ENCODE measurements at regions of chr7 and their contacts with region 1.

Region 1: DNA sequence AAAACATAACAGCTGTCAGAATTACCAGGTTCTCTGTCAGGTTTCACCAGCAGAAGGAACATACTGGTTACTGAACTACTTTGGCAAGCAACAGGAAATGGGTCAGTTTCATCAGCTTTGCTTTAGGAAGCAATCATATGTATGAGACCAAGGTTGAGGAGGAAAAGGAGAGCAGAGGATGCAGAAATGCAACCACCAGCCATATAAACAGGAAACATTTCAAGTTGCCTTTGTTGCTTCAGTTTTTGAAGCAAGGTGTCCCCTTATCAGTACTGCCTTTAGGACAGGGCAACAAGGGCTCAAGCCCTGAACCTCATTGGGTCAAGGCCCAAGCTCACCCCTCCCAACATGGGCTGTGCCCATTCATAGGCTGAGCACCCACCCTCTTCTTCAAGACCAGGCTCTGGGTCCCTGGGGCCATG is 10.2 kb downstream of the HIPK2 start:
- DNase-seq: peak in 5 of 10 donors; percentile 8 to 73 (median 45)
- ATAC-seq: peak; percentile 80 to 85
- H3K4me3 Mint-ChIP-seq: peak overlapping the region in 9 of 10 donors; percentile 43 to 91 (median 59)
- H3K27ac Mint-ChIP-seq: peak overlapping the region; percentile 79 to 96 (median 92)
- H3K4me1 Mint-ChIP-seq: peaks cover 44 to 90% (median 79%) of the 10 kb centered on the region in 4 donors
- H3K27me3 Mint-ChIP-seq: no peaks in the 10 kb centered on the region

Region 2: GRCh38 chr7:139737221-139738100 is 30.1 kb before region 1 on chr7:
- POLR2A ChIA-PET with region 1: interaction called, 20 read pairs
- DNase-seq: peak in 3 of 10 donors; percentile 20 to 35 (median 35)
- ATAC-seq: peak; percentile 73 to 85
- H3K4me3 Mint-ChIP-seq: peak overlapping the region; percentile 47 to 80 (median 72)
- H3K27ac Mint-ChIP-seq: peak overlapping the region; percentile 44 to 95 (median 90)
- H3K4me1 Mint-ChIP-seq: peaks cover 39 to 70% (median 65%) of the 10 kb centered on the region in 4 donors
- H3K27me3 Mint-ChIP-seq: peaks cover 0 to 1% (median 0%) of the 10 kb centered on the region in 5 donors

Region 3: GRCh38 chr7:139753081-139753692 is 14.4 kb before region 1 on chr7:
- POLR2A ChIA-PET with region 1: interaction called, 17 read pairs
- DNase-seq: no peak
- ATAC-seq: peak in 1 of 2 donors; percentile 36
- H3K4me3 Mint-ChIP-seq: no peak overlapping the region
- H3K27ac Mint-ChIP-seq: peak overlapping the region in 2 of 10 donors; percentile 37 to 56
- H3K4me1 Mint-ChIP-seq: peaks cover 36 to 87% (median 77%) of the 10 kb centered on the region in 4 donors
- H3K27me3 Mint-ChIP-seq: no peaks in the 10 kb centered on the region

Region 4: DNA sequence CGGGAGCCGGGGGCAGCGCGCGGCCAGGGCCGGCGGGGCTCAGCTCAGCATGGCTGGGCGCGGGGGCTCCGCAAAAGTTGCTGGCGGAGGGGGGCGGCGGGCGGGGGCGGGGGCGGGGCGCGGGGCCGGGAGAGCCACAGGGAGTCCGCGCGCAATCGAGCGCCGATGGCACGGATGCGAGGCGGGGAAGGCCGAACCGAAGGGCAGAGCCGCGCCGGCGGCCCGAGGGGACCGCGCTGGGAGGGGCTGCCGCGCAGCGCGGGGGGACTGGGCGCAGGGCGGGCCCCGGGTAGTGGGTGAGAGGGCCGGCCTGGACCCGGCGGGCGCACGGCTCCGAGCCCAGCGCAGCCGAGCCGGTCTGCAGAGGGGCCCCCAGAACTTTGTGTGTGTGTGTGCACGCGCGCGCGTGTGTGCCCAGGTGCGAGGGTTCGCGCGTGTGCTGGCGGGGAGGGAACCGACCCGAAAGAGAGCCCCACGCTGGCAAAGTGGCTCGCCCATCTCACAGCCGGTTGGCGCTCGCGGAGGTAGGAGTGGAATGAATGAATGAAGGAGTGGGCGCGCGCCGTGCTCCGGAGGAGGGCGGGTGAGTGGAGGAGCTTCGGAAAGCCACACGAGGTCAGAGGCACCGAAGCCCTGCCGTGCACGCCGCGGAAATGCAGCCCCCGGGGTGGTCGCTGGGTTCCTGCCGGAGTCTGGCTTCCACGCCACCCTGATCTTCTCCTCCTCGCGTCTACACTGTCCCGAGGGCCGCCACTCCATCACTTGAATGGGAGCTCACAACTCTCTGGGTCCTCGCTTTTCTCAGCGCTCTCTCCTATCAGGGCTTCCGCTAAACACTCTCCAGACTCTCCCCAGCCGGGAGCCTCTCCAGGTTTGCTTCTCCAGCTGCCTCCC is 10.6 kb after region 1 on chr7 and contains the start of gene HIPK2:
- POLR2A ChIA-PET with region 1: interaction called, 51 read pairs
- DNase-seq: peak; percentile 60 to 80 (median 70)
- ATAC-seq: peak; percentile 65 to 68
- H3K4me3 Mint-ChIP-seq: peak within 1 kb of the TSS; percentile 94 to 99 (median 98)
- H3K27ac Mint-ChIP-seq: peak within 1 kb of the TSS; percentile 93 to 99 (median 96)
- H3K4me1 Mint-ChIP-seq: peaks cover 34 to 53% (median 41%) of the 10 kb centered on the region in 4 donors
- H3K27me3 Mint-ChIP-seq: peaks cover 2 to 22% (median 13%) of the 10 kb centered on the region in 5 donors
- polyA plus RNA-seq, gene HIPK2: 2.1 to 4.3 (median 3.1) TPM

Region 5: DNA sequence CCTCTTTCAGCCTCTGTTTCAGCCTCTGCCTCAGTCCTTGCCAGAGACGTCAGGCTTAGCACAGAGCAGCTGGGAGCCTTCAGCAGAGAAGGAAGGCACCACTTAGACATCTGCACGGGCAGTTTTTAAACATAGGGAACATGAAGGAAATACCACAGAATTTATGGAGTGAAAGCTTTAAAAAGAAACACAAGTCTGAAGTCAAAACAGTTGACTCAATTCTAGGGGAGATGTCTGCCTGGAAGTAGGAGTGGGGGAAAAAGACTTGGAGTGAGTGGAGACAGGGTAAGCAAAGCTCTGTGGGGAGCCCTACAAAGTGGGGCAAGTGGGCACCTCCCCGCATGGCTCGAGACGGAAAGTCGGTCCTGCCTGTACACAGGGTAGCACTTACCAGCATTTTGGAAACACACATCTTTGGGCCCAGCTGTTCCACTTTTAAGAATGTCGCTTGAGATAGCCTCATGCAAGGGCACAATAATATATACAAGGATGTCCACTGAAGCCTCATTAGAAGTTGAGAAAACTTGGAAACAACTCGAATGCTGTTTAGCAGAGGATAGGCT is 56.5 kb after region 1 on chr7:
- POLR2A ChIA-PET with region 1: no interaction called
- DNase-seq: no peak
- ATAC-seq: no peak
- H3K4me3 Mint-ChIP-seq: no peak overlapping the region
- H3K27ac Mint-ChIP-seq: no peak overlapping the region
- H3K4me1 Mint-ChIP-seq: peaks cover 0 to 14% (median 5%) of the 10 kb centered on the region in 4 donors
- H3K27me3 Mint-ChIP-seq: peaks cover 0 to 19% (median 0%) of the 10 kb centered on the region in 5 donors